ENCODE measurements at regions of chr12 and their contacts with region 1.

Region 1: GRCh38 chr12:54853995-54854566 is at the start of gene MUCL1:
- DNase-seq: peak; percentile 84
- total RNA-seq, gene MUCL1: not detected in 2 replicates

Region 2: DNA sequence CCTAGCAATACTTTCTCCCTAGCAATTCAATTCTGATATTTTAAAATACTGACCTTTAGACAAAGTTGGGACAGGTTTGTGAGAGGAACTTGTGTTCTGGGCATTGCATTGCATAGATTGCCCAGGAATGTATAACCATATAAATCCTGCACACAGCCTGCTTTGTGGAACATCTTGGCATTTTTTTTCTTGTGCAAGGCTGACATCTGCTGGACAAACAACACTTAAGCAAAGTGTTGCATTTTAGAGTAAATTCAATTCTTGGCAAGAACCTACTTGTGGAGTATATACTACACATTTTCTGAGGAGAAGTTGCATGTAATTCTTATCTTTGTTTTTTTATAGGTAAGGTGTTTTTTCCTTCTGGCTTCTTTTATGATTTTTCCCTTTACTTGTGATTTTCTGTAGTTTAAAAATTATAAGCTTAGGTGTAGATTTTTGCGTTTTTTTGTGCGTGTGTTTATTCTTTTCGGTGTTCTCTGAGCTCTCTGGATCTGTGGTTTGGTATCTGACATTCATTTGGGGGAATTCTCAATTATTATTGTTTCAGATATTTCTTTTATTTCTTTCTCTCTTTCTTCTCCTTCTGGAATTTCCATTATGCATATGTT is 104.1 kb after region 1 on chr12:
- in situ Hi-C with region 1: loop called (anchors 25 kb)
- DNase-seq: peak; percentile 81

Region 3: DNA sequence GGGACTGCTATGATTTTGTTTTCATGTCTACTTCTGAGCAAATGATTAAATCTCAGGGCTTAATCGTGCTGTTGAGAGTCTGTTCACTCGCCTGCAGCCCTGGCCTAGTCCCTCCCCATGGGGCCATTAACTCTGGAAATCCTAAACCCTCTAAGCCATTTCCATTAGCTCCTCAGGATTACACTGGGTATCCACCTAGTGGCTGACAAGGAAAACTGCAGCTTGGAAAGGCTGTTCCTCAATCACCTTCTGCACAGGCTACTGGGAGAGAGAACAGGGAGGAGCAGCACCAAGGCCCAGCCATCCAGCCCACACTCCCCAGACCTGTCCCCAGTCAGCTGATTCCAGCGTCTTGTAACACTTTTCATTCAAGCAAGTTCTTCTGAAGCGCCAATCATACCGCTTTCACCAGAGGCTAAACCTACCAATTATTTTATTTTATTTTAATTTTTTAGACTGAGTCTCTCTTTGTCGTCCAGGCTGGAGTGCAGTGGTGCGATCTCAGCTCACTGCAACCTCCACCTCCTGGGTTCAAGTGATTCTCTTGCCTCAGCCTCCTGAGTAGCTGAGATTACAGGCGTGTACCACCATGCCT is 214.4 kb after region 1 on chr12:
- in situ Hi-C with region 1: no loop called
- DNase-seq: peak; percentile 85

Measured in SK-MEL-5 (cell line).